ENCODE measurements at regions of chr5 and their contacts with region 1.

Region 1: DNA sequence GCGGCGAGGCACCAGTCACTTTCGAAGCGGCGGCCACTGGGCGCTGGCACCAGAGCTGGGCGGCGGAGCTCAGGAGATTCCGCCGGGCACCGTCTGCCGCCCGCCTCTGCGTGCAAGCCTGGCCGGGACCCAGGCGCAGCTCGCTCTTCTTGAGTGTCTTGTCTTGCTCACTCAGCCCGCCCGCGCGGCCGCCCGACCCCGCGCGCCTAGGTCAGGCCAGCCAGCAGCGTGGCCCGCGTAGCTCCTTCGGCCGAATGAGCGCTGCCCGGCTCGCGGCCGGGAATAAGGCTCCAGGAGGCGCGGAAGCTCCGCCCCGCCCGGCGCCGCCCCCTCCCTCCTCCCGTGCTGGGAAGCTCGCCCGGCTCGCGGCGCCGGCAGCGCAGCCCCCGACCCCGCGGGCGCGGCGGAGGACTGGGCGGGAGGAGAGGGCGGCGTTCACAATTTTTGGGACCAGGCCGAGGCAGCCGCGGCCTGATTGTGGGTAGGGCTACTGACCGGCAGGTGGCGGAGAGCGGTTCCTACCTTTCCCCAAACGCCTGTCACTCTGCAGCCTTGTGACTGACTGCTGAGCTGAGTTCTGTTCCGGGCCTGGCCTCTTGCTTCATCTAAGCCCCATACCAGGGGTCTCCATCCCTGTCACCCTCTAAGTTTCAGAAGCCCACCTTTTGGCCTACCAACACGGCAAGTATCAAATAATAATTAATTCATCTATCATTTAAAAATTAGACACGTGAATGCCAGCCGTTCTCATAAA is at the start of gene HBEGF:
- DNase-seq: peak; percentile 69
- H3K4me3 Mint-ChIP-seq: peak within 1 kb of the TSS; percentile 70
- H3K27ac Mint-ChIP-seq: no peak within 1 kb of the TSS
- H3K4me1 Mint-ChIP-seq: peaks cover 37% of the 10 kb centered on the region
- H3K27me3 Mint-ChIP-seq: peaks cover 1% of the 10 kb centered on the region
- total RNA-seq, gene HBEGF: 21.5 to 23.5 TPM

Region 2: DNA sequence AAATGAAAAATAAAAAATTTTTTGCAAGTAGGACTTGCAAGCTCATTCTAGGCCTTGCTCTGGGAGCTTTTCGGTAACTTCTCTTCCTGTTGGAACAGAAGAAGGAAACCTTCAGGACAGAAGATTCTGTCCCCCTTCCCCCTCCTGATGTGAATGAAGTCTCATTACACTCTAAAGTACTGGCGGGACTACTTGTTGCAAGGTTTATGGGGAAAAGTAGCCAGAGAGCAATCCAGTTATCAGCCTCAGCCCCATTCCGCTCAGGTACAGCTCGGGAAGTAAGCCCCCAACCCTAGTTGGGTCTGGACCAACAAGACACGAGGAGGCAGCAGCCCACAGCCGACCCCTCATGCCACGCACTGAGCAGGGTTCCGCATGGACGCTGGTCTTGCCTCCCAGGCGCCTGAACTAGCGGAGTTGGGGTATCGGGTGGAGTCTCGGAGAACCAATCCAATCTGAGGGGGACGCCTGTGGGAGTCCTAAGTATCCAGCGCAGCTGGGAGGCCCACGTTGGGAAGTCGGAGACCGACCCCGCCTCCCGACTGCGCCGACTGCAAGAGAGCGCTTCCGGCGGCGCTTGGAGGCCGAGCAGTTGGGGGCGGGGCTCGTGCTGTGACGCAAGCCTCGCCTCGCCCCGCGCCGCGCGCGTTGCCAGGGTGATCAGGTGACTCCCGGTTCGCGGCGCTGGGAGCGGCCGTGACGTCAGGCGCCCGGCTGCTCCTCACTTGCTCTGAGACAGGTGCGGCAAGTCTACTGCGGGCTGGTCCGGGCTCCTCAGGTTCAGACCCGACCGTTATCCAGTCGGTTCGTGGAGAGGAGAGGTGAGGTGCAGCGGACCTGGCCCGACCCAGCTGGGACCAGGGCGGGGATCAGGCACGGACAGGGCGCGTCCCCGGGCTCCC is 171.8 kb before region 1 on chr5 and contains the start of gene CYSTM1:
- CTCF ChIA-PET with region 1: interaction called, 6 read pairs
- POLR2A ChIA-PET with region 1: no interaction called
- intact Hi-C with region 1: loop called (anchors 1 kb)
- DNase-seq: peak; percentile 97
- H3K4me3 Mint-ChIP-seq: peak within 1 kb of the TSS; percentile 92
- H3K27ac Mint-ChIP-seq: peak within 1 kb of the TSS; percentile 64
- H3K4me1 Mint-ChIP-seq: peaks cover 12% of the 10 kb centered on the region
- H3K27me3 Mint-ChIP-seq: peaks cover 3% of the 10 kb centered on the region
- total RNA-seq, gene CYSTM1: 25.2 to 26.5 TPM

Region 3: GRCh38 chr5:140251527-140251973 is 95.0 kb before region 1 on chr5:
- CTCF ChIA-PET with region 1: interaction called, 744 read pairs
- POLR2A ChIA-PET with region 1: interaction called, 3 read pairs
- intact Hi-C with region 1: loop called (anchors 2 kb)
- DNase-seq: peak; percentile 90
- H3K4me3 Mint-ChIP-seq: no peak overlapping the region
- H3K27ac Mint-ChIP-seq: peak overlapping the region; percentile 73
- H3K4me1 Mint-ChIP-seq: peaks cover 41% of the 10 kb centered on the region
- H3K27me3 Mint-ChIP-seq: no peaks in the 10 kb centered on the region

Region 4: GRCh38 chr5:140302786-140303639 is 43.5 kb before region 1 on chr5 and contains the start of gene PFDN1:
- CTCF ChIA-PET with region 1: interaction called, 27 read pairs
- POLR2A ChIA-PET with region 1: interaction called, 4 read pairs
- intact Hi-C with region 1: loop called (anchors 2 kb)
- DNase-seq: peak; percentile 95
- H3K4me3 Mint-ChIP-seq: peak within 1 kb of the TSS; percentile 98
- H3K27ac Mint-ChIP-seq: peak within 1 kb of the TSS; percentile 85
- H3K4me1 Mint-ChIP-seq: peaks cover 26% of the 10 kb centered on the region
- H3K27me3 Mint-ChIP-seq: no peaks in the 10 kb centered on the region
- total RNA-seq, gene PFDN1: 50.1 to 54.6 TPM

Region 5: DNA sequence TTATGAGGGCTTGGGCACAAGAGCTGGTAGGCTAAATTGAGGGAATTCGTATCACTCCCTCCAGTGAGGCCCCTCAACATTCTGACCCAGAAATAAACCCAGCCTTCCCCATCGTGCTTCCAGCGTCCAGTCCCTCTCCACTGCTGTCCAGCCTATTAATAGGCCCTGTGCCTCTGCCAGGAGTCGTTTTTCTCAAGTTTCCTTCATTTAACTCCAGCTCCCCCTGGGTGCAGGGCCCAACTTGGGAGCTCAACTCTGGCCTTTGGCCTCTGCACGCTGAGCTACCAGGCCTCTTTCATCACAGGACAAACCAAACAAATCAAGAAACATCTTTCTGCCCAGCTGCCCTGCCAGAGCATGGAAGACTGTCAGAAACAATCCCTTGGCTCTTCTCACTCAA is 10.1 kb before region 1 on chr5:
- CTCF ChIA-PET with region 1: interaction called, 14 read pairs
- POLR2A ChIA-PET with region 1: no interaction called
- intact Hi-C with region 1: no loop called
- DNase-seq: no peak
- H3K4me3 Mint-ChIP-seq: no peak overlapping the region
- H3K27ac Mint-ChIP-seq: no peak overlapping the region
- H3K4me1 Mint-ChIP-seq: peaks cover 9% of the 10 kb centered on the region
- H3K27me3 Mint-ChIP-seq: no peaks in the 10 kb centered on the region

Region 6: DNA sequence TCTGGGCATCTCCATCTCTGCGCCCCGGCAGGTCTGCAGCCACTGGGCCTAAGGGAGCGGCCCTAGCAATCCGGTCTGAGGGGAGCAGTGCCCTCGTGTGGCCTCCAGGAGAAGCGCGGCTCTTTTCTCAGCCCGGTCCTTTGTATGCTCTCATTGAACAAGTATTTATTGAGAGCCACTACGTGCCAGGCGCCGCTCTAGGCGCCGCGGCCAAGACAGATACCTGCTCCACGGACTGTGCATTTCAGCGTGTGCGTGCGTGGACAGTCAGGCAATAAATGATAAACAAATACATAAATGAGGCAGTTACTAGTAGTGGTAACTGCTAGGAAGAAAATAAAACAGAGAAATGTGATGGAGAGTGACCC is 11.2 kb after region 1 on chr5:
- CTCF ChIA-PET with region 1: interaction called, 23 read pairs
- POLR2A ChIA-PET with region 1: no interaction called
- intact Hi-C with region 1: no loop called
- DNase-seq: peak; percentile 89
- H3K4me3 Mint-ChIP-seq: peak overlapping the region; percentile 66
- H3K27ac Mint-ChIP-seq: no peak overlapping the region
- H3K4me1 Mint-ChIP-seq: peaks cover 14% of the 10 kb centered on the region
- H3K27me3 Mint-ChIP-seq: peaks cover 5% of the 10 kb centered on the region

Region 7: DNA sequence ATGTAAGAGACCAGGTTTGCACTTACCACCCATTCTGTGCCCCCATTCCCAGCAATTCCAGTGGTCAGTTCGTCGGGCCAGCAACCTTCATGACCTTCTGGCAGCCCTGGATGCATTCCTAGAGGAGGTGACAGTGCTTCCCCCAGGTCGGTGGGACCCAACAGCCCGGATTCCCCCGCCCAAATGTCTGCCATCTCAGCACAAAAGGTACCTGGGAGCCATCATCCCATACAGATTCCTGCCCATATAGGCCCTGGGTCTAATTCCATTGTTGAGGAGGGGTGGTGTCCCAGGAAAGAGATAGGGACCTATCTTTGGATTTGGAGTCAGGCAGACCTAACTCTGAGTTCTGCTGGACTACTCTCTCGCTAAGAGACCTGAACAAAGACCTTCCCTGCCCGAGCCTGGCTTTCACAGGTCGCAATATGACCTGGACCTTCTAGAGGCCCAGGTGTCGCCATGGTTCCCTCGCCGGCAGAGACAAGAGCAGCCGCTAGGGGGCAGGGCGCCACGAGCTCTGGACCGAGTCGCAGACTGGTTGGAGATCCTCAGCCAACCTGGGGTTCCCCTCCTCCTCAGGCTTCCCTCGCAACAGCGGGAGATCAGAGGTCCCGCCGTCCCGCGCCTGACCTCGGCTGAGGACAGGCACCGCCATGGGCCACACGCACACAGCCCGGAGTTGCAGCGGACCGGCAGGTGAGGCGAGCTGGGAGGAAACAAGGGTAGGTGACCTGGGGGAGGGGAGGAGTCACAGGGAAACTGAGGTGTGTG is 16.5 kb after region 1 on chr5:
- CTCF ChIA-PET with region 1: interaction called, 21 read pairs
- POLR2A ChIA-PET with region 1: no interaction called
- intact Hi-C with region 1: no loop called
- DNase-seq: peak; percentile 91
- H3K4me3 Mint-ChIP-seq: peak overlapping the region; percentile 72
- H3K27ac Mint-ChIP-seq: peak overlapping the region; percentile 52
- H3K4me1 Mint-ChIP-seq: peaks cover 4% of the 10 kb centered on the region
- H3K27me3 Mint-ChIP-seq: peaks cover 3% of the 10 kb centered on the region

Measured in activated CD4-positive, alpha-beta memory T cell treated with anti-CD3 and anti-CD28 coated beads for 36 hours (primary cell).